ENCODE measurements at regions of chr2 and their contacts with region 1.

Region 1: GRCh38 chr2:111120253-111121027 is at the start of gene BCL2L11:
- DNase-seq: peak; percentile 96
- ATAC-seq: peak; percentile 74
- H3K4me3 ChIP-seq: peak within 1 kb of the TSS; percentile 71 to 93 (median 88)
- H3K4me3 Mint-ChIP-seq: peak within 1 kb of the TSS; percentile 93
- H3K27ac ChIP-seq: peak within 1 kb of the TSS; percentile 75 to 87
- H3K27ac Mint-ChIP-seq: peak within 1 kb of the TSS; percentile 91
- H3K4me1 ChIP-seq: peaks cover 35 to 47% of the 10 kb centered on the region in 2 donors
- H3K4me1 Mint-ChIP-seq: peaks cover 33% of the 10 kb centered on the region
- H3K27me3 ChIP-seq: peaks cover 0 to 41% (median 20%) of the 10 kb centered on the region in 4 experiments
- H3K27me3 Mint-ChIP-seq: peaks cover 27% of the 10 kb centered on the region
- CTCF ChIP-seq: no peak
- total RNA-seq, gene BCL2L11: 164 and 175 TPM in 2 replicates

Region 2: DNA sequence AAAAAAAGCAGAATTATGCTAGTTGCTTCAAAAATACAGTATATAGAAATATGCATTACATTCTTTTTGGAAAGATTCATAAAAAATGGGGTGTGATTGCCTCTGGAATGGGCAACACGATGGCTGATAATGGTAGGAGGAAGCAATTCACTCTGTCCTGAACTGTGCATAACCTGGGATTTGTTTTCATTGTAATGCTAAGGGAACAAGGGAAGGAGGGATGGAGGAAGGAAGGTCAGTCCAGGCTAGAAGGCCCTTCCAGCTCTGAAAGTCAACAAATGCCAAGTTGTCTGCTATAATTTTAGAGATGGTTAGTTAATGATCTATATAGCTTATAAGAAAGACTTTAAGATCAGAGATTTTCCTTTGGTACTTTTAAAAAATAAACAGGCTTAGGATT is 483.3 kb before region 1 on chr2:
- CTCF ChIA-PET with region 1: no interaction called
- POLR2A ChIA-PET with region 1: no interaction called
- intact Hi-C with region 1: no loop called
- DNase-seq: no peak
- ATAC-seq: no peak
- H3K4me3 ChIP-seq: no peak overlapping the region
- H3K4me3 Mint-ChIP-seq: no peak overlapping the region
- H3K27ac ChIP-seq: no peak overlapping the region
- H3K27ac Mint-ChIP-seq: no peak overlapping the region
- H3K4me1 ChIP-seq: no peaks in the 10 kb centered on the region
- H3K4me1 Mint-ChIP-seq: no peaks in the 10 kb centered on the region
- H3K27me3 ChIP-seq: no peaks in the 10 kb centered on the region
- H3K27me3 Mint-ChIP-seq: no peaks in the 10 kb centered on the region
- CTCF ChIP-seq: no peak

Region 3: DNA sequence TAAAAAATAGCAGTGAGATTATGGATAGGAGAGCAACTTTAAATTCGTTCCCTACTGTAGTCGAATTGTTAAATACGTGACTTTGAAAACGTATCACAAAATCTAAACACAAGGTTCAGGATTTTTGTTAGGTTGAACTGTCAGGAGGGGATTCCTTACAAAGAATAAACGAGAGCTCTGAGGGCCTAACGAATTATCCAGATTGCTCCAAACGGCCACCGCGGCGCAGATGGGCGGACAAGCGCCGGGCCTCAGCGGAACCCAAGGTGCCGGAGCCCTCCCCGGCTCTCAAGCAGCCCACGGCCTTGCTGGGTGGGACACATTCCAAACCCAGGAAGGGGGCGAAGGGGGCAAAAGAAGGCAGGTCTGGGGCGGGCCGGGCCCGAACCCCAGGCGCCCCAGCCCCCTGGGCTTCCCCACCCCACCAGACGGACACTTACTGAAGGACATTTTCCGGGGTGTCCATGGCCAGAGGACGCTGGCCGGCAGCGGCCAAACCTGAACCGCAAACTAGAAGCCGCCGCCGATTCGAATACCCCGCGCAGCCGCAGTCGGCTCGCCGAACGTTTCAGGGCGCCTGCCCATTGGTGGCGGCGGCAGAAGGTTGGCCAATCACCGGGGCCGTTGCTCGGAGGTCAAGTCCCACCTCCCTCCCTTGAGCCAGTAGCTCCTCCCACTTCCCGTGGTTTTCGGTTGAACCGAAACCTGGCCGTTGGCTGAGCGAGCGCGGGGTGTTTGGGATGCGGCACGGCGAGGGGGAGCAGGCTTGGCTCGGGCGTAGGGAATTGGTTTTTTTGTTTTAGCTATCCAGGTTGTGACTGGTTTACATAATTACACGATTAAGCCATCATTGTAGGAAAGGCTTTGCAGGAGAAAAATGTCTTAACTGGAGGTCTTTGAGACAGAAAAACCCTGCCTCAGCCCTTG is 442.6 kb before region 1 on chr2 and contains the start of gene BUB1:
- CTCF ChIA-PET with region 1: no interaction called
- POLR2A ChIA-PET with region 1: no interaction called
- intact Hi-C with region 1: loop called (anchors 2 kb)
- DNase-seq: peak; percentile 96
- ATAC-seq: peak; percentile 92
- H3K4me3 ChIP-seq: peak within 1 kb of the TSS; percentile 69 to 98 (median 93)
- H3K4me3 Mint-ChIP-seq: peak within 1 kb of the TSS; percentile 96
- H3K27ac ChIP-seq: peak within 1 kb of the TSS; percentile 77 to 81
- H3K27ac Mint-ChIP-seq: peak within 1 kb of the TSS; percentile 91
- H3K4me1 ChIP-seq: peaks cover 34 to 35% of the 10 kb centered on the region in 2 donors
- H3K4me1 Mint-ChIP-seq: peaks cover 40% of the 10 kb centered on the region
- H3K27me3 ChIP-seq: no peaks in the 10 kb centered on the region
- H3K27me3 Mint-ChIP-seq: no peaks in the 10 kb centered on the region
- CTCF ChIP-seq: no peak
- total RNA-seq, gene BUB1: 1.6 and 2.0 TPM in 2 replicates

Region 4: DNA sequence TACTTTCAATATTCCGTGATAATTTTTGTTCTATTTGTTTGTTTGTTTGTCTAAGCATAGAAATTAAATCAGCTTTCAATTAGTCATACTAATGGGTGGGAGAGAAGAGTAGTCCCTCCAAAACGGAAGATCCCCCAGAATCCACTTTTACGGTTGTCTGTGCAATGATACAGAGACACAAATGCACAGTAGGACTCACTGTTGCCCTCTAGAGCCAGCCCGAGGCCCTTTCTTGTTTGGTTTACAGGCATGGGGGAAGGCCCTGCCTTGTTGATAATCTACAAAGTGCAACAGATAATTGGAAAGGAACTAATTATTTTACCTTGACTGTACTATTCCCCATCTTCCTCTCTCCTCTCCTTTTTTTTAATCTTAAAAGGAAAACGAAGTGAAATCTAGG is 266.9 kb before region 1 on chr2:
- CTCF ChIA-PET with region 1: interaction called, 5 read pairs
- POLR2A ChIA-PET with region 1: interaction called, 7 read pairs
- intact Hi-C with region 1: loop called (anchors 5 kb)
- DNase-seq: peak; percentile 31
- ATAC-seq: no peak
- H3K4me3 ChIP-seq: no peak overlapping the region
- H3K4me3 Mint-ChIP-seq: no peak overlapping the region
- H3K27ac ChIP-seq: no peak overlapping the region
- H3K27ac Mint-ChIP-seq: no peak overlapping the region
- H3K4me1 ChIP-seq: peaks cover 12 to 26% of the 10 kb centered on the region in 2 donors
- H3K4me1 Mint-ChIP-seq: peaks cover 33% of the 10 kb centered on the region
- H3K27me3 ChIP-seq: no peaks in the 10 kb centered on the region
- H3K27me3 Mint-ChIP-seq: no peaks in the 10 kb centered on the region
- CTCF ChIP-seq: peak; percentile 69

Region 5: DNA sequence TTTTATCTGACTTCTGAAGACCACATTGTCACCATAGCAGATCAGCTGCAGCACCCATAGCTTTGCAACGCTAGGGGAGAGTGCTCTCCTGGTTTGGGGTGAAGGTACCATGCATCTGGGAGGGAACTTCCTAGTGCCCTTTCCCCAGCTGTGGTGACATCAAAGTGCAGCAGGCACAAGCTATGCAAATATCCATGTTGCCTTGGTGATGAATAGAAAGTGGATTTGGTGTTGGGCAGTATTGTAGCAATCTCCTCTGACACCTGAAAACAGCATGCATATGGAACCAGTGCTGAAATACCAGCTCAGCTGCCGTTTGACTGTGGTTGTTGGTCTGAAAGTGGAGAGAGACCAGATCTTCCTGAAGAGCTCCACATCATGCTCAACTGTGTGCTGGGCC is 37.4 kb after region 1 on chr2:
- CTCF ChIA-PET with region 1: interaction called, 20 read pairs
- POLR2A ChIA-PET with region 1: interaction called, 13 read pairs
- intact Hi-C with region 1: loop called (anchors 1 kb)
- DNase-seq: peak; percentile 79
- ATAC-seq: peak; percentile 66
- H3K4me3 ChIP-seq: no peak overlapping the region
- H3K4me3 Mint-ChIP-seq: peak overlapping the region; percentile 77
- H3K27ac ChIP-seq: peak overlapping the region; percentile 42 to 73
- H3K27ac Mint-ChIP-seq: peak overlapping the region; percentile 94
- H3K4me1 ChIP-seq: peaks cover 26 to 30% of the 10 kb centered on the region in 2 donors
- H3K4me1 Mint-ChIP-seq: peaks cover 61% of the 10 kb centered on the region
- H3K27me3 ChIP-seq: no peaks in the 10 kb centered on the region
- H3K27me3 Mint-ChIP-seq: no peaks in the 10 kb centered on the region
- CTCF ChIP-seq: no peak

Region 6: DNA sequence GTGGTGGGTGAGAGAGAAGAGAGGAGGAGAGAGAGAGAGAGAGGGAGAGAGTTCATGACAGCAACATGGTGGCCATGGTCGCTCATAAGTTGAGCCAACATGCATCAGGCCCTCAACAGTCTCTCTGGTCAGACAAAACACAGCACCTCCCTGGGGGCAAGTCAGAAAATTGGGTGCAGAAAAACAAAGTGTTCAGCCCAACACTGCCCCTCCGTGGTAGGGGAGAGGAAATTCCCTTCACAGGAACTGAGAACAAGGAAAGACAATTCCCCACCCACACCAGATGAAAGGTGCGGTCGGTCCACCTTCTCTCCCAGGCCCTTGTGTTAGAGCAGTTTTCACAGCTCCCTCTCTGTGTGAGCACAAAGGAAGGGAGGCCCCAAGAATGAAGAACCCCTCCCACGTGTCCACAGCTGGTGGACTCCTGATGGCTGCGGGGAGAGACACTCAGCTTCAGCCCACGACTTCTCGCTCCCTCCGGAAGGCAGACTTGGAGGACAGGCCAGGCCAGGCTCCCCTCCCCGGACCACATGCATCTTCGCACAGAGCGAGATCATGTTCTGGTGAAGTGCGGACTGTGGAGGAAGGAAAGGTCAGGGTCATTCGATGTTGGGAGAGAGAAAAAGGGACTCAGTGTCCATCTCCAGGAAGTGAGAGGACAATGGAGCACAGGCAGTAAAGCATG is 581.8 kb after region 1 on chr2:
- CTCF ChIA-PET with region 1: interaction called, 3 read pairs
- POLR2A ChIA-PET with region 1: no interaction called
- intact Hi-C with region 1: loop called (anchors 1 kb)
- DNase-seq: peak; percentile 54
- ATAC-seq: no peak
- H3K4me3 ChIP-seq: no peak overlapping the region
- H3K4me3 Mint-ChIP-seq: no peak overlapping the region
- H3K27ac ChIP-seq: no peak overlapping the region
- H3K27ac Mint-ChIP-seq: no peak overlapping the region
- H3K4me1 ChIP-seq: peaks cover 0 to 17% of the 10 kb centered on the region in 2 donors
- H3K4me1 Mint-ChIP-seq: peaks cover 29% of the 10 kb centered on the region
- H3K27me3 ChIP-seq: no peaks in the 10 kb centered on the region
- H3K27me3 Mint-ChIP-seq: peaks cover 5% of the 10 kb centered on the region
- CTCF ChIP-seq: peak; percentile 63

Measured in B cell (primary cell).